ENCODE measurements at regions of chr1 and their contacts with region 1.

Region 1: GRCh38 chr1:233440951-233441401 is 113.5 kb downstream of the MAP3K21 start:
- DNase-seq: peak in 1 of 2 experiments; percentile 44
- H3K4me3 ChIP-seq: no peak overlapping the region
- H3K4me3 Mint-ChIP-seq: no peak overlapping the region
- H3K27ac Mint-ChIP-seq: no peak overlapping the region
- H3K4me1 ChIP-seq: no peaks in the 10 kb centered on the region
- H3K4me1 Mint-ChIP-seq: no peaks in the 10 kb centered on the region
- H3K27me3 ChIP-seq: no peaks in the 10 kb centered on the region
- H3K27me3 Mint-ChIP-seq: peaks cover 3% of the 10 kb centered on the region
- CTCF ChIP-seq: peak; percentile 62 to 68

Region 2: DNA sequence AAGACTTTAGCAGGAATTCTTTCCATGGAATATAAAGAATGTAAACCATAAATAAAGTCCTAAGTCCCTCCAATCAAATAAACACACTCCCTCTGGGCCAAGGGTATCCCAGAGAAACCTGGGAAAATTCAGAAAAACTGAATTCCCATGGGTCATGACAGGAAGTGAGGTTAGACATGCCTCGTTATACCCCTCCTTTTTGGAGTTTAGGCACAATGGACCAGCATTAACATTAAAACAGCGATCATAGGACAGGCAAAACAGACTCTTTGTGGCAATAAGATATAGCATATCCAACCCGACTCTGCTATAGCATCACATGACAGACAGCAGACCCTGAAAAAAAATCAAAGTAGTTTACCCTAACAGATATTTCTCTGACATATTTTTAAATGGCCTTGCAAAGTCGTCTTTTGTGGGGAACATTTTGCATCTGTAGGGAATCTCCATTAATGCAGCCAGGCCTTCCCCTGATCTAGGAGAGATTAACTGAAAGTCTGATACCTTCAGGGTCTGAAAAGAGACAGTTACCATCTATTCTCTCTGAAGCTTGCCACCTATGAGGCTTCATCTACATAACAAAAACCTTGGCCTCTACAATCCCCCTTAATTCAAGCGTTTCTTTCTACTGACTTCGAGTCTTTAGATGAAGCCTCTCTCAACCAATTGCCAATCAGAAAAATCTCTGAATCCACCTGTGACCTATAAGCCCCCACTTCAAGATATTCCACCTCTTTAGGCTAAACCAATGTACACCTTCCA is 29.9 kb after region 1 on chr1:
- CTCF ChIA-PET with region 1: no interaction called
- POLR2A ChIA-PET with region 1: no interaction called
- intact Hi-C with region 1: no loop called
- DNase-seq: no peak
- H3K4me3 ChIP-seq: no peak overlapping the region
- H3K4me3 Mint-ChIP-seq: no peak overlapping the region
- H3K27ac Mint-ChIP-seq: no peak overlapping the region
- H3K4me1 ChIP-seq: no peaks in the 10 kb centered on the region
- H3K4me1 Mint-ChIP-seq: no peaks in the 10 kb centered on the region
- H3K27me3 ChIP-seq: no peaks in the 10 kb centered on the region
- H3K27me3 Mint-ChIP-seq: no peaks in the 10 kb centered on the region
- CTCF ChIP-seq: no peak

Region 3: GRCh38 chr1:233518349-233518748 is 77.4 kb after region 1 on chr1:
- CTCF ChIA-PET with region 1: no interaction called
- POLR2A ChIA-PET with region 1: no interaction called
- intact Hi-C with region 1: no loop called
- DNase-seq: peak in 1 of 2 experiments; percentile 14
- H3K4me3 ChIP-seq: no peak overlapping the region
- H3K4me3 Mint-ChIP-seq: no peak overlapping the region
- H3K27ac Mint-ChIP-seq: no peak overlapping the region
- H3K4me1 ChIP-seq: no peaks in the 10 kb centered on the region
- H3K4me1 Mint-ChIP-seq: no peaks in the 10 kb centered on the region
- H3K27me3 ChIP-seq: no peaks in the 10 kb centered on the region
- H3K27me3 Mint-ChIP-seq: no peaks in the 10 kb centered on the region
- CTCF ChIP-seq: peak; percentile 1 to 26

Region 4: DNA sequence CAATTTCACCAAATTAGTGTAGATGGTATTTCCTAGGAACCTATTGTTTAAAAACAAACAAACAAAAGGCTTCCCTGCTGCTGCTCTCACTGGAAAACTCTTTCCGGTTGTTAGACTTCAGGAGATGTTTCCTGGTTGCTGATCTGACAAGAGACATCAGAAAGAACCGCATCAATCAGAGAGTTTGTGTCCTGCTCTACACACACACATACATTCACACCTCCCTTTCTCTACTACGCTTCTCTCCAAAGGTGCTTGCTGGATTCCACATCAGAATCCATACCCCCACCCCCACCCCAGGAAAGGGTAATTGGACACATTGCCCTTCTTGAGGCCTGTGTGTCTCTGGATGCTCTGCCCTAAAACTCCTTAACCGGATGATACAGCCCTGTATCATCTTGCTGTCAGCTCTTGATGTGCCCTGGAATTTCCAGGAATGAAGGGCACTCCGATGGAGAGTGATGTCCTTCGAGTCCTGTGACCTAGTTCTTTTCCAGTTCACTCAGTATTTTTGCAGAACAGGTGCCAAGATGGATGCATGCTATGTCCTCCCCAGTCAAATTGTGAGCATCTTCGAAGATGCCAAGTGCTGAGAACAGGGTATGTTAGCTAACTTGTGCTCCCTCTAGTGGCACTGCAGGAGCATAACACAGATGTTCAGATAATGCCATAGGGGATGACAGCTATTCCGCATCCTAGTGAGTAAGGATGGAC is 349.8 kb after region 1 on chr1:
- CTCF ChIA-PET with region 1: interaction called, 8 read pairs
- POLR2A ChIA-PET with region 1: no interaction called
- intact Hi-C with region 1: loop called (anchors 1 kb)
- DNase-seq: peak in 1 of 2 experiments; percentile 43
- H3K4me3 ChIP-seq: no peak overlapping the region
- H3K4me3 Mint-ChIP-seq: no peak overlapping the region
- H3K27ac Mint-ChIP-seq: no peak overlapping the region
- H3K4me1 ChIP-seq: no peaks in the 10 kb centered on the region
- H3K4me1 Mint-ChIP-seq: no peaks in the 10 kb centered on the region
- H3K27me3 ChIP-seq: no peaks in the 10 kb centered on the region
- H3K27me3 Mint-ChIP-seq: no peaks in the 10 kb centered on the region
- CTCF ChIP-seq: peak; percentile 67 to 96

Region 5: DNA sequence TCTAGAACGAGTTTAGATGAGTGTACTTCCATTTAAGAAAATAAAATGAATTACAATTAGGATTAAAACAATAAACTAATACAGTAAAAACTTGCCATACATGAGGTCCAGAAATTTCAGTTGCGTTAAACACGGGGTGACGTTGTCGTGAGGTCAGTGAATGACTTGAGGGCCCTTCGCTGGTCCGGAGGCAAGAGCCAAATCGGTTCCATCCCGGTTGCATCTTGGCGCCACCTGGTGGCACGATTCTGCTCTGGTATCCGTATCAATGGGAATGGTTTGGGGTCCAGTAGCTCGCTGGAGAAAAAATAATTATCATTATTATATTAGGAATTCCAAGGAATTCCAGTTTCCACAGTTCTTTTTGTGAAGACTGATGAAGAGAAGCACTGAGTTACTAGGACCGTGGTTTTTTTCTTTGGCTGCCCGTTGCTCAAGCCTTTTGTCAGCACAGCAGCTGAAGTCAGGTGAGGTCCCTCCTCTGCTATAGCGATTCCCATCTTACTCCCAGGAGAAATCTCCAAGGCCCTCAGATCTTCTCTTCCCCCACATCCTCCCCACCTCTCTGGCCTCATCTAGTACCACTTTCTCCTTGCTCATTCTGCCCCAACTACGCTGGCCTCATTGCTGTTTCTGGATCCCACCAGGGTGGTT is 624.9 kb after region 1 on chr1:
- CTCF ChIA-PET with region 1: interaction called, 18 read pairs
- POLR2A ChIA-PET with region 1: no interaction called
- intact Hi-C with region 1: loop called (anchors 1 kb)
- DNase-seq: peak; percentile 71 to 79
- H3K4me3 ChIP-seq: no peak overlapping the region
- H3K4me3 Mint-ChIP-seq: no peak overlapping the region
- H3K27ac Mint-ChIP-seq: no peak overlapping the region
- H3K4me1 ChIP-seq: no peaks in the 10 kb centered on the region
- H3K4me1 Mint-ChIP-seq: no peaks in the 10 kb centered on the region
- H3K27me3 ChIP-seq: no peaks in the 10 kb centered on the region
- H3K27me3 Mint-ChIP-seq: peaks cover 2% of the 10 kb centered on the region
- CTCF ChIP-seq: peak; percentile 82 to 91